PC-3 (cell line): ENCODE measurements at regions of chr17 and their contacts with region 1.

Region 1: DNA sequence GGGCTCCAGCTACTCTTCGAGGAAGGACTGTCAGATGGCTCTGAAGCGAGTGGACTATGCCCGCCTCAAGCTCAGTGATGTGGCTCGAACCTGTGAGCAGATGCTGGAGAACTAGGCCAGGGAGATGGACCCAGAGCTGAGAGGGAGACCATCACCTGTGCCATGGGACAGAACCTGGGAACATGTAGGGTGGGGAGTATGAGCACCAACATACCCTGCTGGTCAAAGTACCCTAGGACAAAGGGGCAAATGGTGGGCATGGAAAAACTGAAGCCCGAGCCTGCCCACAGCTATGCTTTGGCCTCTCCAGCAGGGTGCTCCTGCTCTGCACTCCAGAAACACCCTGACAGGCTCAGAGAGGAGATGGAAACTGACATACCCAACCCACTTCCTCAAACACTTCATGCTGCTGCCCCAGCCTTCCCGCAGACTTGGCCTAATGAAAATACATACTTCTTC is 1.9 kb downstream of the MED11 start:
- DNase-seq: no peak
- ATAC-seq: no peak
- H3K4me3 ChIP-seq: no peak overlapping the region
- H3K27ac ChIP-seq: no peak overlapping the region
- H3K4me1 ChIP-seq: no peaks in the 10 kb centered on the region
- H3K27me3 ChIP-seq: no peaks in the 10 kb centered on the region
- CTCF ChIP-seq: no peak

Region 2: GRCh38 chr17:4709794-4710692 is 23.1 kb before region 1 on chr17 and contains the start of gene ARRB2:
- CTCF ChIA-PET with region 1: interaction called, 7 read pairs
- POLR2A ChIA-PET with region 1: no interaction called
- intact Hi-C with region 1: loop called (anchors 1 kb)
- DNase-seq: peak; percentile 95
- ATAC-seq: peak; percentile 81
- H3K4me3 ChIP-seq: peak within 1 kb of the TSS; percentile 74
- H3K27ac ChIP-seq: peak within 1 kb of the TSS; percentile 60
- H3K4me1 ChIP-seq: peaks cover 11% of the 10 kb centered on the region
- H3K27me3 ChIP-seq: no peaks in the 10 kb centered on the region
- CTCF ChIP-seq: peak; percentile 58; the same call in 1 of the 2 replicates
- total RNA-seq, gene ARRB2: 22.2 and 28.1 TPM in 2 replicates

Region 3: GRCh38 chr17:4777969-4778761 is 45.1 kb after region 1 on chr17:
- CTCF ChIA-PET with region 1: no interaction called
- POLR2A ChIA-PET with region 1: no interaction called
- intact Hi-C with region 1: no loop called
- DNase-seq: no peak
- ATAC-seq: no peak
- H3K4me3 ChIP-seq: no peak overlapping the region
- H3K27ac ChIP-seq: no peak overlapping the region
- H3K4me1 ChIP-seq: no peaks in the 10 kb centered on the region
- H3K27me3 ChIP-seq: no peaks in the 10 kb centered on the region
- CTCF ChIP-seq: no peak

Region 4: DNA sequence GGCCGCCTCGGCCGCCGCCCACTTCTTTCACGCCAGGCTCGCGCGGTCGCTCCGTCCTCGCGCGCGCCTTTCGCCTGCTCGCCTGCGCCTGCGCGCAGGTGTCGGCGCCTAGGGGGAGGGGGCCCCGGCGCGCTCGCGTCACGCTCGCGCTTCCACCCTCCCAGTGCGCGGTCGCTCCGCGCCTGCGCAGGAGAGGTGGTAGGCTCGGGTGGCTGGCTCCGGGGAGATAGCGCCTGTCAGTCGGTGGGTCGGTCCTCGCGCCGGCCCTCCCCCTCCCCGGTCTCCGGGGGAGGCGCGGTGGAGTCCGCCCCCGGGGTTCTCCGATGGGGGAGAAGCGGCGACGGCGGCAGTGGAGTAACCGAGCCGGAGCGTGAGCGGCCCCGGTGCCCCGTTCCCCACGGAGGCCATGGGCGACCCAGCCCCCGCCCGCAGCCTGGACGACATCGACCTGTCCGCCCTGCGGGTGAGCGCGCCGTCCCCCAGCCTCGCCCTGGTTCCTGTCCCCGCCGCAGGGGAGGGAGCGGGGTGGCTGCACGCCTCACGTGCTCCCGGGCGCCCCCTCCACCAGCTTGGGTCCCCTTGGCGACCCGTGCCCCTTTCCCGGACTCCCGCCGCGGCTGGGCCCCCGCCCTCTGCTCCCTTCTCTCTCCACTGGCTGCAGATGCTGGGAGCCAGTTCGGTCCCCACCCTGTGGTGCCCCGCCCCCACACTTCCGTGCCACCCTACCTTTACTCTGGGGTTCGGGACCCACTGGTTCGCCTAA is 100.3 kb after region 1 on chr17 and contains the start of gene MINK1:
- CTCF ChIA-PET with region 1: no interaction called
- POLR2A ChIA-PET with region 1: no interaction called
- intact Hi-C with region 1: no loop called
- DNase-seq: peak; percentile 95
- ATAC-seq: peak; percentile 83
- H3K4me3 ChIP-seq: peak within 1 kb of the TSS; percentile 97
- H3K27ac ChIP-seq: peak within 1 kb of the TSS; percentile 60
- H3K4me1 ChIP-seq: peaks cover 24% of the 10 kb centered on the region
- H3K27me3 ChIP-seq: no peaks in the 10 kb centered on the region
- CTCF ChIP-seq: no peak
- total RNA-seq, gene MINK1: 44.5 and 64.8 TPM in 2 replicates

Region 5: DNA sequence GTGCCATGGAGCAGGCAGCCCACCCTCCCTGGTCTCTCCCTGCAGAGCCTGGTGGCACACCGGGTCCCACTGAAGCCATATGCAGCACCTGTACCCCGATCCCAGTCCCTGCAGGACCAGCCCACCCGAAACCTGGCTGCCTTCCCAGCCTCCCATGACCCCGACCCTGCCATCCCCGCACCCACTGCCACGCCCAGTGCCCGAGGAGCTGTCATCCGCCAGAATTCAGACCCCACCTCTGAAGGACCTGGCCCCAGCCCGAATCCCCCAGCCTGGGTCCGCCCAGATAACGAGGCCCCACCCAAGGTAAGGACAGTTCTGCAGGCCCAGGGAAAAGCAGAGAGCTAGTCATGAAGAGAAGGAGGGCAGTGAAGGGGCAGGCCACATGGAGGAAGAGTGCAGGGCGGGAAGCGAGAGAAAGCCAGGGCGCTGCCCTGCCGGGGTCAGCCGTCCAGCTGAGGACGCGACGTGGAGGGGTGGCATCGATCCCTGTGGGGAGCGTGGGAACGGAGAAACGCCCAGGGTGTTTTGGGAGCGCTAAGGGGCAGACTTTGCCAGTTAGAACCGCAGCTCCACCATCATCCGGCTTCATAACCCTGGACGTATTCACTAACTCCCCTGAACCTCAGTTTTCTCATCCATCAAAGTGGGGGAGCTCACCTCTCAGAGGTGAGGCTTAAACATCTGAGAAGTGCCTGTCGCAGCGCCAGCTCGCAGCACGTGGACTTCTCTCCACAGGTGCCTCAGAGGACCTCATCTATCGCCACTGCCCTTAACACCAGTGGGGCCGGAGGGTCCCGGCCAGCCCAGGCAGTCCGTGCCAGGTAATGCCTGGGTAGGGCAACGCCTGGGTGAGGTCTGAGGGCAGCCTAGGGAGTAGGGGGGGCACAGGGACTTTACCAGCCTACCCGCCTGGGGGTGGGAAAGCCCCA is 158.6 kb after region 1 on chr17:
- CTCF ChIA-PET with region 1: no interaction called
- POLR2A ChIA-PET with region 1: no interaction called
- intact Hi-C with region 1: loop called (anchors 1 kb)
- DNase-seq: no peak
- ATAC-seq: no peak
- H3K4me3 ChIP-seq: no peak overlapping the region
- H3K27ac ChIP-seq: no peak overlapping the region
- H3K4me1 ChIP-seq: no peaks in the 10 kb centered on the region
- H3K27me3 ChIP-seq: no peaks in the 10 kb centered on the region
- CTCF ChIP-seq: no peak